A673 (cell line): ENCODE measurements at regions of chr3 and their contacts with region 1.

Region 1: GRCh38 chr3:187759601-187760000 is 14.3 kb upstream of the BCL6 start:
- DNase-seq: no peak
- H3K4me3 ChIP-seq: no peak overlapping the region
- H3K27ac ChIP-seq: no peak overlapping the region
- H3K4me1 ChIP-seq: no peaks in the 10 kb centered on the region
- H3K27me3 ChIP-seq: no peaks in the 10 kb centered on the region
- CTCF ChIP-seq: no peak

Region 2: DNA sequence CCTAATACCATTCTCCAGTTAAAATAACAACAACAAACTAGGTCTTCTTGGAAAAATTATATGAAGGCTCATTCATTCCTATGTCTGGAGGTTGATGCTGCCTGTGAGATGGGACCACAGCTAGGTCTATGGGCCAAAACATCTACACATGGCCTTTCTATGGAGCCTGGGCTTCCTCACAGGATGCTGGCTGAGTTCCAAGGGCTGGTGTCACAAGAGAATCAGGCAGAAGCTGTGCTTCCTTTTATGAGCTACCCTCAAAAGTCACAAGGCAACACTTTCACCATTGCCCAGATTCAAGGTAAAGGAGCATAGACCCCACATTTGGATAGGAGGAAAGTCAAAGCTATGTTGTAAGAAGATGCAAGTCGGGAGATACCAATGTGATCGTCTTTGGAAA is 52.6 kb before region 1 on chr3:
- CTCF ChIA-PET with region 1: no interaction called
- POLR2A ChIA-PET with region 1: no interaction called
- intact Hi-C with region 1: no loop called
- DNase-seq: peak; percentile 33
- H3K4me3 ChIP-seq: no peak overlapping the region
- H3K27ac ChIP-seq: no peak overlapping the region
- H3K4me1 ChIP-seq: no peaks in the 10 kb centered on the region
- H3K27me3 ChIP-seq: no peaks in the 10 kb centered on the region
- CTCF ChIP-seq: no peak

Region 3: DNA sequence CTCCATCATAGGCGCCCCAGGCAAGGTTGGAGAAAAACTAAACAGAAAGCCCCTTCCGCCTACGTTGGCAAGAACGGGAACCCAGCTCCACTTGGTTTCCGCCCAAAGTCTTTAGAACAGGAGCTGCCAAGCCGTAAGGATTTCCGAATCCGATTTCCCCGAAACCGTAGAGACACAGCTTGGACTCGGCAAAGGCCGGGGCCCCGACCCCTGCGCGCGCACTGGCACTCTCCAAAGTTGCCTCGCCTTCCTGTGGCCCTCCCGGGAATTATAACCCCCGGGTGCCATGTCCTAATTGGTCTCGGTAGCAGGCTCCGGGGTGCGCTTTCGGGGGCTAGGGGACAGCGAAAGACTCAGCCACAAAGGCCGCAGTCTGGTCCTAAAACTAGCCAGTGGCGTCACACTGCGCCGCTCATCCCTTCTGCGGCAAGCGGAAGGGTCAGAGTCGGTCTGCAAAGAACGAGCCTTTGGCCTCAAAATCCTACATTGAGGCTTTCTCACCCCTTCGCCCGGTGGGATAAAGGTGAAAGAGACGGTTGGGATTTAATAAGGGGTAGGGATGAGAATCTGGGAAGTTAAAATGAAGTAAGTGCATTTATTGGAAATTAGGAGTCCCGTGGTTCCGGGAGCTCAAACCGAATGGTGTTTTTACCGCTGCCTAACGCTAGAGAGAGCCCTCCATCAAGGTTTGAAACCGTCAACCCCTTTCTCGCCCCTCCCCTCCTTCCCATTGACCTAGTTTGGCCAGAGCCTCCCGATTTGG is 21.1 kb before region 1 on chr3:
- CTCF ChIA-PET with region 1: no interaction called
- POLR2A ChIA-PET with region 1: no interaction called
- intact Hi-C with region 1: no loop called
- DNase-seq: peak; percentile 90
- H3K4me3 ChIP-seq: peak overlapping the region; percentile 70
- H3K27ac ChIP-seq: peak overlapping the region; percentile 58
- H3K4me1 ChIP-seq: peaks cover 29% of the 10 kb centered on the region
- H3K27me3 ChIP-seq: no peaks in the 10 kb centered on the region
- CTCF ChIP-seq: peak; percentile 87

Region 4: DNA sequence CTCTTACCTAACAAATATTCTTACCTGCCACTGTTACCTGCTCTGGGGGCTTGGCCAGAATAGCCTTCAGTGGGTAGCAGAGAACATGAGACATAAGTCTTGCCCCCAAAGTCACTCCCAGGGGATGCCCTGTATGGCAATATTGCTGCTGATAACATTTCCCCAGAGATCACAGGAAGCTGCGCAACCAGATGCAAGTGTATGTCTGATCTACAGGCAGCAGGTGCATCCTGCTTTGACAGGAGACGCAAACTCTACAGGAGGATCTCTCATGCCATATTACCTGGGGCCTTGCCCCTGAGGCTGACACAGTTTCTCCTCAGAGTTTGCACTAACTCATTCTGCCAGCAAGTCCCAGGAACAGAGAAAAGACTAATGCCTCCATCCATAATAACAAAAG is 220.0 kb after region 1 on chr3:
- CTCF ChIA-PET with region 1: no interaction called
- POLR2A ChIA-PET with region 1: interaction called, 22 read pairs
- intact Hi-C with region 1: no loop called
- DNase-seq: no peak
- H3K4me3 ChIP-seq: no peak overlapping the region
- H3K27ac ChIP-seq: no peak overlapping the region
- H3K4me1 ChIP-seq: no peaks in the 10 kb centered on the region
- H3K27me3 ChIP-seq: no peaks in the 10 kb centered on the region
- CTCF ChIP-seq: no peak

Region 5: GRCh38 chr3:188841906-188842305 is 1082.3 kb after region 1 on chr3:
- CTCF ChIA-PET with region 1: no interaction called
- POLR2A ChIA-PET with region 1: interaction called, 11 read pairs
- intact Hi-C with region 1: no loop called
- DNase-seq: no peak
- H3K4me3 ChIP-seq: no peak overlapping the region
- H3K27ac ChIP-seq: no peak overlapping the region
- H3K4me1 ChIP-seq: no peaks in the 10 kb centered on the region
- H3K27me3 ChIP-seq: no peaks in the 10 kb centered on the region
- CTCF ChIP-seq: no peak

Region 6: DNA sequence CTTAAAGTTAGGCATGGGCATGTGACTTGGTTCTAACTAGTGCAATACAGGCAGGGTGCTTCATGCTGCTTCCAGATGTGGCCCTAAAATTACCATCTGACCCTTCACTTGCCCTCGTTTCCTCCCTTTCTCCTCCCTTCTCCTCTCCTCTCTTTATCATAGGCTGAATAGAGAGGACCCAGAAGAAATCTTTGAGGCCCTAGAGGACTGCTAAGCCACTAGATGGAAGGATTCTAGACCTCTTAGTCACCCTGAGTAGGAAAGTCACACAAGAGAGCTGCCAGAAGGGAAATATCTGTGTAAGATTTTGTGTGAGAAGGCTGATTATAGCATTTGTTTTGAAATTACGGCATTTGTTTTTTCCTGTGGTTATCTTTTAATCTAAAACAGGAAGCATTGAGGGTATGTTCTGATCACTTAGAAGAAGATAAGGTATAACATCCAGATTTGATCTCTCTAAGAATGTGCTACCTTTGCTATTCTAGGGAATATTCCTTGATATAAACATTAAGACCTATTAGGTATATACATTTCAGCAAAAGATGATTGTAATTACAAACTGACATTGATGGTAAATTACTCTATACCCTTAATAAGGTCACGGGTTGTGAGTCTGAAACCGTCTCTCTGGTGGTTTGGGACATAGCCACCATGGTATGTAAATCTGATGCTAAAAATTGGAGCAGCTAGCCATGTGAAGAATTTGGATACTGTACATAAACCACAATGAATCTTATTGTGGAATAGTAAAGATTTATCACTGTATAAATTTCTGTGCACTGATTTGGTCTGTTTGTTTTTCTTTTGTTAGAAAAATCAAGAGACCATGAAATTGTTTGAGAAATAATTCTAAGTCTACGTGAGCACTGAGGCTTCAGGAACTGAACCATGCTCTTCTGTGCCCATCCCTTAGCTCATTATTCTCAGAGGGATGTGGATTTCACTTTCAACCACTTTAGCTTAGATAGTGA is 1955.7 kb after region 1 on chr3:
- CTCF ChIA-PET with region 1: no interaction called
- POLR2A ChIA-PET with region 1: no interaction called
- intact Hi-C with region 1: no loop called
- DNase-seq: peak; percentile 22
- H3K4me3 ChIP-seq: no peak overlapping the region
- H3K27ac ChIP-seq: no peak overlapping the region
- H3K4me1 ChIP-seq: peaks cover 25% of the 10 kb centered on the region
- H3K27me3 ChIP-seq: no peaks in the 10 kb centered on the region
- CTCF ChIP-seq: no peak